ENCODE measurements at regions of chr1 and their contacts with region 1.

Region 1: GRCh38 chr1:68120136-68120791 is 69.8 kb upstream of the DIRAS3 start:
- DNase-seq: peak; percentile 74
- H3K4me3 ChIP-seq: no peak overlapping the region
- CTCF ChIP-seq: peak; percentile 67

Region 2: GRCh38 chr1:67766141-67766978 is 353.9 kb before region 1 on chr1:
- CTCF ChIA-PET with region 1: interaction called, 12 read pairs
- POLR2A ChIA-PET with region 1: no interaction called
- DNase-seq: peak; percentile 64
- H3K4me3 ChIP-seq: peak overlapping the region; percentile 38
- CTCF ChIP-seq: peak; percentile 42

Region 3: GRCh38 chr1:68081775-68082283 is 38.4 kb before region 1 on chr1:
- CTCF ChIA-PET with region 1: no interaction called
- POLR2A ChIA-PET with region 1: no interaction called
- DNase-seq: no peak
- H3K4me3 ChIP-seq: no peak overlapping the region
- CTCF ChIP-seq: no peak

Region 4: DNA sequence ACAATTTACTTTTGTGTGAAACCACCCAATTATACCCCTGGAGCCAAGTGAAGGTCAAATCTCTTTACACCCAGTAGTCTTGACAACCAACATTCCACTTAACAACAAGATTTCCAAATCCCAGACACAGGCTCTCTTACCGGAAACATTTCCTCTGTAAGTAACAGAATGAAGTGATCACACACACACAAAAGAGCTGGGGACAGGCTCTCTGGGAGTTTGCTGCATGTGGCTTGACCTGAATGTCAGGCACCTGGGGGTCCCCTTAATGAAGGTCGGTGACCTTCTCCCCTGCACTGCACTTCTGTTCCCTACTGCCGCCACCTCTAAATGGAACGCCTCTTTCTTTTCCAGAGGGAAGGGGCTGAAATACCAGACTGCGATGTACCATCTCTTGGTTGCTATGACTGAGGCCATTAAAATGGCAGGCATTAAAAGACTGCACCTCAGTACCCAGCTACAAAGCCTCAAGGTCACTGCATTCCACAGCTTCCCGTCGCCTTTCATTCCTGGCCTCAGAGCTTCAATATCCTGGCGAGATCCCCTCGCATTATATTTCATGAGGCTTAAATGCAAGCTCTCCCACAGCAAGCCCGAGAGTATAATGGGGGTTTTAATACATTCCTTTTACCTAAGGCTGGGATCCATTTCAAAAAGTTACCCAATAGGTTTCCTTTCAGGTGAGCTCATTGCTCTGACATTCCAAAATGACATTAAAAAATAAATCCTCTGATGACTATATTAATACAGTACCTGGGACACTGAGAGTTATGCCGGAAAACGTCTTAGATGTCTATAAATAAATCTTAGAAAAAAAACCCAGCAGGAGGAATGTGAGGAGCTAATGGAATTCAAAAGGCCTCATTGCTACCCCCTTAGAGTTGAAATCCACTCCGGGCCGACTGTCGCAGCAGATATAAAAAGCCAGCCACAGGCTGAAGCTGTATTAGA is 21.1 kb after region 1 on chr1:
- CTCF ChIA-PET with region 1: interaction called, 22 read pairs
- POLR2A ChIA-PET with region 1: no interaction called
- DNase-seq: no peak
- H3K4me3 ChIP-seq: no peak overlapping the region
- CTCF ChIP-seq: no peak

Region 5: DNA sequence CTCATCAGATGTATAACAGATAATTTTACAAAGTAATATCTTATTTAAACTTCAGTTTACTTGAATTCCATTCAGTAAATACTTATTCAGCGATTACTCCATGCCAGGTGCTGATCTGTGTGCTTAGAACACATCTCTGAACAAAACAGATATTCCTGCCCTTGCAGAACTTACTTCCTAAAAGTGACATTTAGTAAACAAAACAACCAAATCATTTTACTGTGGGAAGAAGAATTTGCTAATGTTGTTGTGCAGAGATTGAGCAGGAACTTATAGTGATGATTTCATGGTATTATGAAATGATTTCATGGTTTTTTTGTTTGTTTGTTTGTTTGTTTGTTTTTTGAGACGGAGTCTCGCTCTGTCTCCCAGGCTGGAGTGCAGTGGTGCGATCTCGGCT is 151.3 kb after region 1 on chr1:
- CTCF ChIA-PET with region 1: interaction called, 11 read pairs
- POLR2A ChIA-PET with region 1: no interaction called
- DNase-seq: no peak
- H3K4me3 ChIP-seq: no peak overlapping the region
- CTCF ChIP-seq: no peak

Region 6: DNA sequence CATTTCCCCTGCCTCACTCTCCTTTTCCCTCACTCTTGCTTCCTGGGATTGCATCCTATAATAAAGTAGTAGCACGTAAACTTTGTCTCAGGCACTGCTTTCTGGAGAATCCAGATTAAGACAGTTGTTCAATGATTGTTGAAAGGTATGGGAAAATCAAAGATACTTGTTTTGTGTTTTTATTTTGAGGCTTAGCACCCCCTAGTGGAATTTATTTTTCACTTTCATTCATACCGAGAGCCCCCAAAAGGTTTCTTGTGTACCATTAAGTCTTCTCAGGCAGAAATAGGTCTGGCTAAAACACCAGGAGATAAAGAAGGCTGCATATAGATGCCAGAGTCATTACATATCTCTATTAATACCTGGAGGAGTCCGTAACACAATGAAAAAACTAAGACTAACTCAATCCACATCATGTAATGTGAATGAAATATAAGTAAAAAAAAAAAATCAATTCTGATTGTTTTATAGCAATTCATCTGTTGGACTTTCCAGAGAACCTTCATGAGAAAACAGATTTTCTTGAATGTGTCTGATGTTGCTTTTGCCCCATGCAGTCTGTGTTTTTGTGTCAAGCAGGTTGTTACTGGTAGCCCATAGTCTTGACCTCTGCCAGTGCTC is 226.0 kb after region 1 on chr1:
- CTCF ChIA-PET with region 1: interaction called, 964 read pairs
- POLR2A ChIA-PET with region 1: interaction called, 3 read pairs
- DNase-seq: no peak
- H3K4me3 ChIP-seq: no peak overlapping the region
- CTCF ChIP-seq: peak; percentile 10

Region 7: DNA sequence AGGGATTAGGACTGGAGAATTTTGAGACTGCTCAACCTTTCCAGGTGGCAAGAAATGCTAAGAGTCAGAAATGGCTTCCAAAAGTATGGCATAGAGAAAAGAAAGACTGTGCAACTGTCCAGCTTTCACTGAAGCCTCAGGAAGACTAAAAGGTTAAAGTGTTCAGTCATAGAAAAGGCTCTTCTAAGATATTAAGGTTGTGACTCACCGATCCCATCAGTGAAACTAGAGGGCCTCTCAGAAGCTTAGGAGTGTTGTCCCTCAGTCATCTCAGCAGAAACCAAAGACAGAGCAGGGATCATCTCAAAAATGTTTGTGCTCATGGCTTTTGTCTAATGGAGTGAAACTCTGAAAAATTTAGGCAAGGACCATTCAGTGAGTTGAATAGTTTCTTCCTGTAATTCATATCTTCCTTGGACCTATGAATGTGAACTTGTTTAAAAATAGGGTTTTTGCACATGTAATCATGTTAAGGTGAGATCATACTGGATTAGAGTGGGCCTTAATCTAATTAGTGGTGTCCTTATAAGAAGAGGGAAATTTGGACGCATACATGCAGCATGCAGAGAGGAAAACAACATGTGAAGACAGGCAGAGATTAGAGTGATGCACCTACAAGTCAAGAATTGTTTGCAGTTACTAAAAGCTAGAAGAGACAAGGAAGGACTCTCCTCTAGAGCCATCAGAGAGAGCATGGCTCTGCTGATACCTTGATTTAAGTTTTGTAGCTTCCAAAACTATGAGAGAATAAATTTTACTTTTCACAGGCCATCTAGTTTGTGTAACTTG is 258.2 kb after region 1 on chr1:
- CTCF ChIA-PET with region 1: interaction called, 17 read pairs
- POLR2A ChIA-PET with region 1: no interaction called
- DNase-seq: no peak
- H3K4me3 ChIP-seq: no peak overlapping the region
- CTCF ChIP-seq: no peak

Region 8: GRCh38 chr1:68470388-68470970 is 350.2 kb after region 1 on chr1:
- CTCF ChIA-PET with region 1: interaction called, 10 read pairs
- POLR2A ChIA-PET with region 1: no interaction called
- DNase-seq: no peak
- H3K4me3 ChIP-seq: no peak overlapping the region
- CTCF ChIP-seq: peak; percentile 38